Calu3 (cell line): ENCODE measurements at regions of chr11 and their contacts with region 1.

Region 1: DNA sequence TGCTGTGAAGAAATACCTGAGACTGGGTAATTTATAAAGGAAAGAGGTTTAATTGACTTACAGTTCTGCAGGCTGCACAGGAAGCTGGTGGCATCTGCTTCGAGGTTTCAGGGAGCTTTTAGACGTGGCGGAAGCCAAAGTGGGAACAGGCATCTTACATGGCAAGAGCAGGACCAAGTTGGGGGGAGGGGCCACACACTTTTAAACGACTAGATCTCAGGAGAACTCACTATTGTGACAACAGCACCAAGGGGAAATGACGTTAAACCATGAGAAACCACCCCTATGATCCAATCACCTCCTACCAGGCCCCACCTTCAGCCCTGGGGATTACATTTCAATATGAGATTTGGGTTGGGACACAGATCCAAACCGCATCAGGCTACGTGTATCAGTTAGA is 11.1 kb upstream of the SCGB1D4 start:
- DNase-seq: no peak
- H3K4me3 Mint-ChIP-seq: no peak overlapping the region
- H3K27ac Mint-ChIP-seq: no peak overlapping the region
- H3K4me1 Mint-ChIP-seq: no peaks in the 10 kb centered on the region
- H3K27me3 Mint-ChIP-seq: peaks cover 17% of the 10 kb centered on the region
- CTCF ChIP-seq: no peak

Region 2: GRCh38 chr11:62201370-62201769 is 108.6 kb before region 1 on chr11:
- CTCF ChIA-PET with region 1: no interaction called
- intact Hi-C with region 1: no loop called
- DNase-seq: peak; percentile 66
- H3K4me3 Mint-ChIP-seq: no peak overlapping the region
- H3K27ac Mint-ChIP-seq: no peak overlapping the region
- H3K4me1 Mint-ChIP-seq: no peaks in the 10 kb centered on the region
- H3K27me3 Mint-ChIP-seq: peaks cover 86% of the 10 kb centered on the region
- CTCF ChIP-seq: no peak

Region 3: DNA sequence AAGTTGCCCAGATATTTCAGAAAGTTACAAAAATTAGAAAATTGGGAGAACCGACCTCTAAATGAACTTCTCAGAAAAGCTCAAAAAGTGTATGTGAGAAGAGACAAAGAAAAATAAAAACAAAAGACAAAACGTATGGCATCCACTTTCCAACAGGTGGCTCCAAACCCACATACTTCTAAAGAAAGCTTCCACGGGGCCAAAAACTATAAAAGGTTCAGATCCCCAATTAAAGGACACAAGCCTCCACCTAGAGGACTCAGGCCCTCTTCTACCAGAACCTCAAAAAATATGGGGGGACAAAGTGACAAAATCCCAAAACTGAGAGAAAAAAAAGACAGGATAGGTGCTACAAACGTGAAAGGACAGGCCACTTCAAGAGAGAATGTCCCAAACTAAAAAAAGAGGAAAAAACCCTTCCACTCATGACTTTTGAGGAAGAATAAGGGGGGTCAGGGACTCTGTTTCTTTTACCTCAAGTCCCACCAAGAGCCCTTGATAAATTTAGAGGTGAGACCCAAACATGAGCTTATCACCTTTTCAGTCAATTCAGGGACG is 92.7 kb before region 1 on chr11:
- CTCF ChIA-PET with region 1: interaction called, 9 read pairs
- intact Hi-C with region 1: loop called (anchors 1 kb)
- DNase-seq: peak; percentile 5
- H3K4me3 Mint-ChIP-seq: no peak overlapping the region
- H3K27ac Mint-ChIP-seq: no peak overlapping the region
- H3K4me1 Mint-ChIP-seq: no peaks in the 10 kb centered on the region
- H3K27me3 Mint-ChIP-seq: peaks cover 35% of the 10 kb centered on the region
- CTCF ChIP-seq: peak; percentile 42